ENCODE measurements at regions of chr10 and their contacts with region 1.

Region 1: DNA sequence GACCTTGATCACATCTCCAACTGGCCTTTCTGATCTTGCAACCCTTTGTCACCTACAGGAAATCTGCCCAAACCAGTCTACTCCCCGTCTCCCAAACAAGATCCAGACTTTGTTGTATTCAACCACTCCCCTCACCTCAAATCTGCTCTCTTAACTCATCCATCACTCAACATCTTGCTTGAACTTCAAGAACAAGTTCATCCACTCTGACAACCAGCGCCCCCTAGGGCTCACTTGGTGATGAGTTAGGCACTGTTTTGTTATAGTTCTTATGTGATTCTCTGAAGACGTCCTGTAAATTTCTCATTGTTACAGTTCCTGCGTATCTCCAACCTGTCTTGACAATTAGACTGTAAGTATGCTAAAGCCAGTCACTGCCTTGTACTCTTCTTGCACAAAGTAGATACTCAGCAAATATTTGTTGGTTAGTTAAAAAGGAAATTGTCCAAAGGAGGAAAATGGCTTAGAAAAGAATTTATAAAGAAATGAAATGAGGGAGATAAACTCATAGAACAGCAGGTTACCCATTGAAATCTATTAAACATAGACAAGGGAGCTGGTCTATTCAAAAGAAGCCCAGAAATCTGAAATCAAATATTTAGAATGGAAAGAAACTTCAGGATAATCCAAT is 5.3 kb downstream of the FRMD4A start:
- DNase-seq: peak; percentile 50
- ATAC-seq: peak; percentile 76
- H3K4me3 ChIP-seq: no peak overlapping the region
- H3K27ac ChIP-seq: no peak overlapping the region
- H3K4me1 ChIP-seq: no peaks in the 10 kb centered on the region
- H3K27me3 ChIP-seq: peaks cover 49% of the 10 kb centered on the region
- CTCF ChIP-seq: peak; percentile 36 to 88 (median 78); a peak in 5 of 6 replicates
- POLR2A ChIP-seq: no peak
- RAD21 ChIP-seq: peak; percentile 57

Region 2: GRCh38 chr10:14195433-14195832 is 130.0 kb before region 1 on chr10:
- CTCF ChIA-PET with region 1: interaction called, 11 read pairs
- POLR2A ChIA-PET with region 1: no interaction called
- RAD21 ChIA-PET with region 1: no interaction called
- intact Hi-C with region 1: loop called (anchors 1 kb)
- DNase-seq: no peak
- ATAC-seq: no peak
- H3K4me3 ChIP-seq: no peak overlapping the region
- H3K27ac ChIP-seq: no peak overlapping the region
- H3K4me1 ChIP-seq: no peaks in the 10 kb centered on the region
- H3K27me3 ChIP-seq: peaks cover 67% of the 10 kb centered on the region
- CTCF ChIP-seq: no peak
- POLR2A ChIP-seq: no peak
- RAD21 ChIP-seq: no peak